Ascending aorta (tissue), 2 donors: ENCODE measurements at regions of chr20 and their contacts with region 1.

Region 1: GRCh38 chr20:5126512-5127203 is at the start of gene CDS2:
- DNase-seq: peak; percentile 98 to 100
- H3K4me3 ChIP-seq: peak within 1 kb of the TSS; percentile 85 to 91
- H3K27ac ChIP-seq: peak within 1 kb of the TSS; percentile 98 to 99
- H3K4me1 ChIP-seq: peaks cover 2 to 30% of the 10 kb centered on the region in 2 donors
- H3K27me3 ChIP-seq: no peaks in the 10 kb centered on the region
- CTCF ChIP-seq: peak; percentile 47 to 78 (median 69)
- total RNA-seq, gene CDS2: 41.4 TPM

Region 2: DNA sequence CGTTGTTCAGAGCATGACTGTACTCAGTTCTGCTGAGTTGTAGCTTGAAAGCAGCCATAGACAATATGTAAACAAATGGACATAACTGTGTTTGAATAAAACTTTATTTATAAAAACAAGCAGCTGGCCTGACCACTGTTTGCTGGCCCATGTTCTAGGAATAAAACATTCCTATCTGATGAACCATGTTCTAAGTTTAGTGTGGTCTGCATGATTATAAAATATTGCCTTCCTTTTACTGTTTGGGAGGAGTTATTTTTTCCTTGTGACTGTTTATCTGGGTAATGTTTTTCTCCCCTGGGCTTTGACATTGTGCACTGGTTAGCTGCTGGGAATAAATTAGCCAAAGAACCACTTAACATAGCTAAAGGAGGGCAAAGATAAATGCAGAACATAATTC is 55.3 kb after region 1 on chr20:
- intact Hi-C with region 1: loop called (anchors 1 kb)
- DNase-seq: no peak
- H3K4me3 ChIP-seq: peak overlapping the region in 1 of 2 donors; percentile 53
- H3K27ac ChIP-seq: peak overlapping the region; percentile 71 to 81
- H3K4me1 ChIP-seq: peaks cover 16 to 35% of the 10 kb centered on the region in 2 donors
- H3K27me3 ChIP-seq: no peaks in the 10 kb centered on the region
- CTCF ChIP-seq: no peak

Region 3: GRCh38 chr20:5191829-5192569 is 65.3 kb after region 1 on chr20:
- intact Hi-C with region 1: loop called (anchors 1 kb)
- DNase-seq: no peak
- H3K4me3 ChIP-seq: no peak overlapping the region
- H3K27ac ChIP-seq: peak overlapping the region; percentile 7 to 49
- H3K4me1 ChIP-seq: peaks cover 0 to 3% of the 10 kb centered on the region in 2 donors
- H3K27me3 ChIP-seq: no peaks in the 10 kb centered on the region
- CTCF ChIP-seq: peak; percentile 56 to 73 (median 70)